Activated T-helper 2 cell treated with anti-CD3 and anti-CD28 coated beads, Interferon-gamma antibody, Interleukin-2, Interleukin-4, amounts not matched to agents 10 μg/mL and 5 μg/mL and 100 μg/mL, durations not matched to agents 14 hours and 24 hours and 36 hours (primary cell): ENCODE measurements at regions of chrX and their contacts with region 1.

Region 1: DNA sequence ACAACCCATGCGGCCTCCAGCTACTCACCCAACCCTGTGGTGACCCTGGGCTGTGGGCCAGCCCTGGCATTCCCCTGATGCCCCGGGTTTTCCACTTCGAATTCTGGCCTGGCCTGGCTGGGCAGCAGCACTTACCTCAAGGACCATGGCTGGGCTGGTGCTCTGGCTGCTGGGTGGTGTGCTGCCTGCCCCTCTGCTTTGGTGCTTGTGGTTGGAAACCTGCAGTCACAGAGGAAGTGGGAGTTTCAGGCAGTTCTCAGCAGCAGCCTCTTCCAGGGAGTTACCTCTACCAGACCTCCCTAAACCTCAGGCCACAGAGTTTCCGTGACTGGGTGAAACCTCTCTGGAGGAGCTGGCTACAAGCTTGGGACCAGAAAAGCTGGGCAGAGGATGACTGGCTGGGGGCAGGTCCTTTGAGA is at the start of gene CXCR3:
- DNase-seq: peak; percentile 58
- H3K4me3 Mint-ChIP-seq: peak within 1 kb of the TSS; percentile 79
- H3K27ac Mint-ChIP-seq: peak within 1 kb of the TSS; percentile 95
- H3K4me1 Mint-ChIP-seq: peaks cover 61% of the 10 kb centered on the region
- H3K27me3 Mint-ChIP-seq: no peaks in the 10 kb centered on the region
- total RNA-seq, gene CXCR3: 11.1 and 11.4 TPM in 2 replicates

Region 2: GRCh38 chrX:71541210-71542022 is 76.9 kb before region 1 on chrX:
- intact Hi-C with region 1: loop called (anchors 2 kb)
- DNase-seq: no peak
- H3K4me3 Mint-ChIP-seq: peak overlapping the region; percentile 79
- H3K27ac Mint-ChIP-seq: peak overlapping the region; percentile 93
- H3K4me1 Mint-ChIP-seq: peaks cover 41% of the 10 kb centered on the region
- H3K27me3 Mint-ChIP-seq: no peaks in the 10 kb centered on the region

Region 3: GRCh38 chrX:71637848-71638247 is 19.5 kb after region 1 on chrX:
- intact Hi-C with region 1: loop called (anchors 1 kb)
- DNase-seq: no peak
- H3K4me3 Mint-ChIP-seq: no peak overlapping the region
- H3K27ac Mint-ChIP-seq: no peak overlapping the region
- H3K4me1 Mint-ChIP-seq: peaks cover 12% of the 10 kb centered on the region
- H3K27me3 Mint-ChIP-seq: no peaks in the 10 kb centered on the region

Region 4: GRCh38 chrX:71652405-71652804 is 34.1 kb after region 1 on chrX:
- intact Hi-C with region 1: loop called (anchors 1 kb)
- DNase-seq: peak; percentile 22
- H3K4me3 Mint-ChIP-seq: no peak overlapping the region
- H3K27ac Mint-ChIP-seq: no peak overlapping the region
- H3K4me1 Mint-ChIP-seq: peaks cover 5% of the 10 kb centered on the region
- H3K27me3 Mint-ChIP-seq: peaks cover 1% of the 10 kb centered on the region